SK-N-SH (cell line): ENCODE measurements at regions of chr17 and their contacts with region 1.

Region 1: GRCh38 chr17:38667099-38667786 is 7.5 kb downstream of the EPOP start:
- DNase-seq: peak; percentile 88
- H3K4me3 ChIP-seq: peak overlapping the region in 1 of 2 experiments; percentile 50; a peak in 1 of 4 replicates
- H3K27ac ChIP-seq: no peak overlapping the region
- H3K4me1 ChIP-seq: peaks cover 0 to 6% of the 10 kb centered on the region in 2 experiments; a peak in 1 of 4 replicates
- H3K27me3 ChIP-seq: no peaks in the 10 kb centered on the region
- CTCF ChIP-seq: peak; percentile 99
- EP300 ChIP-seq: no peak
- RAD21 ChIP-seq: peak; percentile 98

Region 2: DNA sequence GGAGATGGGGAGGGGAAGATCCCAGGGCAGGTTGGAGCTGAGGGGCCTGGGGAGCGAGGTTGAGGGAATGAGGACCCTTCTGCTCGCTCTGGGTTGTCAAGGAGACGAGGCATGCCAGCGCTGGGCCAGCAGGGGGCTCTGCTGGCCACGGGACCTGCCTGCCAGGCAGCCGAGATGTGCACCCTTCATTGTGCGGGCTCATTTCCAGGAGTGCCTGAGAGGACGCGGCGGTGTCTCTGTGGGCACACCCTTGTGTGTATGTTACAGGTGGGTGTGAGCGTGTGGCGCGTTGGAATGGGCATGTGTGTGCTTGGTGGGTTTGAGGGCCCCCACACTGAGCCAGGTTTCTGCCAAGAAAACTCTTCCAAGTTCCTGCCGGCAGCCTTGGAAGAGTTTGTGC is 223.1 kb before region 1 on chr17:
- CTCF ChIA-PET with region 1: interaction called, 19 read pairs
- POLR2A ChIA-PET with region 1: no interaction called
- DNase-seq: peak; percentile 91
- H3K4me3 ChIP-seq: no peak overlapping the region; a peak in 1 of 4 replicates
- H3K27ac ChIP-seq: no peak overlapping the region
- H3K4me1 ChIP-seq: peaks cover 10 to 17% of the 10 kb centered on the region in 2 experiments; a peak in 2 of 4 replicates
- H3K27me3 ChIP-seq: no peaks in the 10 kb centered on the region
- CTCF ChIP-seq: peak; percentile 94
- EP300 ChIP-seq: no peak
- RAD21 ChIP-seq: peak; percentile 97

Region 3: DNA sequence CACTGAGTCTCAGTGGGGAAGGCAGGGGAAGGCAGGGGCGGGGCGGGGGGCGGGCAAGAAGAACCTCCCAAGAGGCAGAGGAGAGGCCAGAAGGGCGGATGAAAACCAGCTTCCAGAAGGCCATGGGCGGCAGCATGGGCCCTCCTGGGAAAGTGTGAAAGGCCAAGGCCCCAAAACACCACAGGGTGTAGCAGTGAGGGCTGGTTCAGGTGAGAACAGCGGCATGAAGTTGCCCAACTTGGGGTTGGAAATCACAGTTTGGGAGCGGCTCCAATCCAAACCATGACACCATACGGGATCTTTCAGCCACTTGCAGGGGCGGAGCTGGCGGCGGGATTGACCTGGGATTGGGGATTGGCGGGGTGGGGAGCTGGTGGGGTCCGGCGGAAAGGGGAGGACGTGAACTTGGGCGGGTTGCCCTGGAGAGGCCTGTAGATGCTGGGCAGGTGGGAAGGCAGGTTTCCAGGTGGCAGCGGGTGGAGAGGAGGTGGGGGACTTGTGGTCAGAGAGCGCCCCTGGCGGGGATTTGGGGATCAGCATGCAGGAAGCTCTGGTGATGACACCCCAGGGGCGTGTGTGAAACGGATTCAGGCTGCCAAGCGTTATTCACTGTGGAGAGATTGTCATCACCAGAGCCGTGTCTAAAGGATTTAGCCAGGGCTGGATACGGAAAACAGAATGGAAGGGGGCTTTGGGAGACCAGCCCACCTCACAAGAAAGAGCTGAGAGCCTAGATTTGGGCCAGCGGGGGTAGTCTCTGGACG is 158.1 kb before region 1 on chr17:
- CTCF ChIA-PET with region 1: interaction called, 111 read pairs
- POLR2A ChIA-PET with region 1: no interaction called
- DNase-seq: peak; percentile 98
- H3K4me3 ChIP-seq: peak overlapping the region; percentile 17 to 50; a peak in 2 of 4 replicates
- H3K27ac ChIP-seq: no peak overlapping the region
- H3K4me1 ChIP-seq: peaks cover 13 to 14% of the 10 kb centered on the region in 2 experiments; a peak in 2 of 4 replicates
- H3K27me3 ChIP-seq: no peaks in the 10 kb centered on the region
- CTCF ChIP-seq: peak; percentile 83
- EP300 ChIP-seq: no peak
- RAD21 ChIP-seq: peak; percentile 70

Region 4: DNA sequence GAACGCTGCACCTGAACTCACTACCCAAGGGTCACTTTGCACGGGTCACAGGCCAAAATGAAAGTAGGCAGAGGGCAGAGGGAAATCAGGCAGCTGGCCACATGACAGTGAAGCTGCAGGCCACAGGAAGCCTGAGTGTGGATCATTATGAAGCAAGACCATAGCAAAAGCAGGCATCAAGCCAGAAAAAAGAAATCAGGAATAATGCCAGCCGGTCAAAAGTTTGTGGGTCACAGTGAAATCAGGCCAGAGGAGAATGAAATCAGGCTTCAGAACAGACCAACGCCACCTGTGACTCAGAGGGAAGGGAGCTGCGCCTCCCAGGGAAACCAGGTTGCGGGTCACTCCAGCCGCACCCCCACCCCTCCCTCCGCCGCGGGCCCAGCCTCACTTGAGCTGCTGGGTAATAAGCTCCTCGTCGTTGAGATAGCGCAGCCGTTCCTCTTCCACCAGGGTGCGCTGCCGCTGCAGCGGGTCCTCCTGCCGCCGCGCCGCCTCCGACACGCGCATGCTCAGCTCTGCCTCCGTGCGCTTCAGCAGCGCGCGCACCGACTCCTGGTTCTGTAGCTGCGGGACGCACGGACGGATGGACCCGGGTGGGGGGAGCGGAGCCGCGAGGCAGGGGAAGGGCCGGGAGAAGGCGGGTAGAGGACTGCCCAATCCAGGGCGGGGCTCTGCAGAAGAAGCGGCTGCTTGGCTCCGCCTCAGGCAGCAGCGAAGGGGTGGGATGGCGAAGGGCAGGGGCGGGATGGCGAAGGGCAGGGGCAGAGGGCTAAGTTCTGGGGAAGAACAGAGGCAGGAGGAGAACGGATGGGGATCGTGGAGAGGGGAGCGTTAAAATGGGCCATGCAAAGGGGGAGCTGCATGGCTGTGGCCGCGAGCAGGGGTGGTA is 109.2 kb before region 1 on chr17:
- CTCF ChIA-PET with region 1: interaction called, 63 read pairs
- POLR2A ChIA-PET with region 1: no interaction called
- DNase-seq: peak; percentile 97
- H3K4me3 ChIP-seq: peak overlapping the region; percentile 35 to 55
- H3K27ac ChIP-seq: no peak overlapping the region; a peak in 1 of 4 replicates
- H3K4me1 ChIP-seq: peaks cover 0 to 30% of the 10 kb centered on the region in 2 experiments; a peak in 2 of 4 replicates
- H3K27me3 ChIP-seq: no peaks in the 10 kb centered on the region
- CTCF ChIP-seq: peak; percentile 84
- EP300 ChIP-seq: no peak; a peak in 1 of 4 replicates
- RAD21 ChIP-seq: peak; percentile 83

Region 5: GRCh38 chr17:38584350-38584925 is 82.8 kb before region 1 on chr17:
- CTCF ChIA-PET with region 1: interaction called, 33 read pairs
- POLR2A ChIA-PET with region 1: no interaction called
- DNase-seq: peak; percentile 86
- H3K4me3 ChIP-seq: peak overlapping the region in 1 of 2 experiments; percentile 21; a peak in 1 of 4 replicates
- H3K27ac ChIP-seq: no peak overlapping the region
- H3K4me1 ChIP-seq: peaks cover 5 to 45% of the 10 kb centered on the region in 2 experiments; a peak in 3 of 4 replicates
- H3K27me3 ChIP-seq: no peaks in the 10 kb centered on the region; the same call in none of the 2 replicates
- CTCF ChIP-seq: peak; percentile 97
- EP300 ChIP-seq: no peak
- RAD21 ChIP-seq: peak; percentile 81

Region 6: GRCh38 chr17:38605888-38606645 is 61.2 kb before region 1 on chr17 and contains the start of gene SRCIN1:
- CTCF ChIA-PET with region 1: interaction called, 111 read pairs
- POLR2A ChIA-PET with region 1: no interaction called
- DNase-seq: peak; percentile 92
- H3K4me3 ChIP-seq: peak within 1 kb of the TSS; percentile 60 to 63
- H3K27ac ChIP-seq: peak within 1 kb of the TSS in 1 of 2 experiments; percentile 83; a peak in 2 of 4 replicates
- H3K4me1 ChIP-seq: peaks cover 0 to 58% of the 10 kb centered on the region in 2 experiments; a peak in 1 of 4 replicates
- H3K27me3 ChIP-seq: no peaks in the 10 kb centered on the region; the same call in 1 of the 2 replicates
- CTCF ChIP-seq: peak; percentile 90
- EP300 ChIP-seq: no peak
- RAD21 ChIP-seq: peak; percentile 50
- polyA plus RNA-seq, gene SRCIN1: 0.45 and 1.0 TPM in 2 replicates